A673 (cell line): ENCODE measurements at regions of chr7 and their contacts with region 1.

Region 1: GRCh38 chr7:27160546-27161213 is 4.2 kb upstream of the HOXA7 start:
- DNase-seq: peak; percentile 87
- H3K4me3 ChIP-seq: peak overlapping the region; percentile 50
- H3K27ac ChIP-seq: no peak overlapping the region
- H3K4me1 ChIP-seq: peaks cover 4% of the 10 kb centered on the region
- H3K27me3 ChIP-seq: peaks cover 61% of the 10 kb centered on the region
- CTCF ChIP-seq: peak; percentile 96

Region 2: GRCh38 chr7:26995666-26996065 is 165.0 kb before region 1 on chr7:
- CTCF ChIA-PET with region 1: no interaction called
- POLR2A ChIA-PET with region 1: no interaction called
- intact Hi-C with region 1: no loop called
- DNase-seq: no peak
- H3K4me3 ChIP-seq: no peak overlapping the region
- H3K27ac ChIP-seq: no peak overlapping the region
- H3K4me1 ChIP-seq: no peaks in the 10 kb centered on the region
- H3K27me3 ChIP-seq: peaks cover 5% of the 10 kb centered on the region
- CTCF ChIP-seq: no peak

Region 3: GRCh38 chr7:27112955-27113949 is 47.4 kb before region 1 on chr7:
- CTCF ChIA-PET with region 1: interaction called, 10 read pairs
- POLR2A ChIA-PET with region 1: no interaction called
- intact Hi-C with region 1: no loop called
- DNase-seq: no peak
- H3K4me3 ChIP-seq: no peak overlapping the region
- H3K27ac ChIP-seq: no peak overlapping the region
- H3K4me1 ChIP-seq: no peaks in the 10 kb centered on the region
- H3K27me3 ChIP-seq: peaks cover 97% of the 10 kb centered on the region
- CTCF ChIP-seq: no peak